Activated T-helper 1 cell treated with anti-CD3 and anti-CD28 coated beads, Interleukin-12 subunit alpha, Interleukin-12 subunit beta, Interleukin-2, Interleukin-4 antibody, amounts not matched to agents 30 ng/mL and 10 ng/mL and 1 ng/mL, durations not matched to agents 14 hours and 24 hours and 36 hours (primary cell): ENCODE measurements at regions of chr14 and their contacts with region 1.

Region 1: GRCh38 chr14:102509744-102510615 is at the start of gene ANKRD9:
- DNase-seq: peak; percentile 89
- H3K4me3 Mint-ChIP-seq: peak within 1 kb of the TSS; percentile 84
- H3K27ac Mint-ChIP-seq: peak within 1 kb of the TSS; percentile 55
- H3K4me1 Mint-ChIP-seq: peaks cover 14% of the 10 kb centered on the region
- H3K27me3 Mint-ChIP-seq: no peaks in the 10 kb centered on the region
- total RNA-seq, gene ANKRD9: 13.4 TPM in 2 replicates

Region 2: DNA sequence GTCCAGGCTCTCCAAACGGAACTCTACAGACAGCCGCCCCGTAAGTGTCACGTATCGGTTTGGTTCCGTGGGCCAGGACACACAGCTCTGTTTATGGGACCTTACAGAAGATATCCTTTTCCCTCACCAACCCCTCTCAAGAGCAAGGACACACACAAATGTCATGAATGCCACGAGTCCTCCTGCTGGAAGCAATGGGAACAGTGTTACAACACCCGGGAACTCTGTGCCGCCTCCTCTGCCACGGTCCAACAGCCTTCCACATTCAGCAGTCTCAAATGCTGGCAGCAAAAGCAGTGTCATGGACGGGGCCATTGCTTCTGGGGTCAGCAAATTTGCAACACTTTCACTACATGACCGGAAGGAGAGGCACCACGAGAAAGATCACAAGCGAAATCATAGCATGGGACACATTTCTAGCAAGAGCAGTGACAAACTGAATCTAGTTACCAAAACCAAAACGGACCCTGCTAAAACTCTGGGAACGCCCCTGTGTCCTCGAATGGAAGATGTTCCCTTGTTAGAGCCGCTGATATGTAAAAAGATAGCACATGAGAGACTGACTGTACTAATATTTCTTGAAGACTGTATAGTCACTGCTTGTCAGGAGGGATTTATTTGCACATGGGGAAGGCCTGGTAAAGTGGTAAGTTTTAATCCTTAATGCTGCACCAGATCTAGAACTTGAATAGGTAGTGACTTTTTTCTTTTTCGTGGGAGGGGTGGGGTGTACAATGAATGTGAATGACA is 300.6 kb before region 1 on chr14:
- intact Hi-C with region 1: no loop called
- DNase-seq: no peak
- H3K4me3 Mint-ChIP-seq: no peak overlapping the region
- H3K27ac Mint-ChIP-seq: no peak overlapping the region
- H3K4me1 Mint-ChIP-seq: no peaks in the 10 kb centered on the region
- H3K27me3 Mint-ChIP-seq: no peaks in the 10 kb centered on the region

Region 3: GRCh38 chr14:102235275-102235897 is 274.6 kb before region 1 on chr14:
- intact Hi-C with region 1: loop called (anchors 1 kb)
- DNase-seq: peak; percentile 68
- H3K4me3 Mint-ChIP-seq: no peak overlapping the region
- H3K27ac Mint-ChIP-seq: no peak overlapping the region
- H3K4me1 Mint-ChIP-seq: no peaks in the 10 kb centered on the region
- H3K27me3 Mint-ChIP-seq: no peaks in the 10 kb centered on the region

Region 4: DNA sequence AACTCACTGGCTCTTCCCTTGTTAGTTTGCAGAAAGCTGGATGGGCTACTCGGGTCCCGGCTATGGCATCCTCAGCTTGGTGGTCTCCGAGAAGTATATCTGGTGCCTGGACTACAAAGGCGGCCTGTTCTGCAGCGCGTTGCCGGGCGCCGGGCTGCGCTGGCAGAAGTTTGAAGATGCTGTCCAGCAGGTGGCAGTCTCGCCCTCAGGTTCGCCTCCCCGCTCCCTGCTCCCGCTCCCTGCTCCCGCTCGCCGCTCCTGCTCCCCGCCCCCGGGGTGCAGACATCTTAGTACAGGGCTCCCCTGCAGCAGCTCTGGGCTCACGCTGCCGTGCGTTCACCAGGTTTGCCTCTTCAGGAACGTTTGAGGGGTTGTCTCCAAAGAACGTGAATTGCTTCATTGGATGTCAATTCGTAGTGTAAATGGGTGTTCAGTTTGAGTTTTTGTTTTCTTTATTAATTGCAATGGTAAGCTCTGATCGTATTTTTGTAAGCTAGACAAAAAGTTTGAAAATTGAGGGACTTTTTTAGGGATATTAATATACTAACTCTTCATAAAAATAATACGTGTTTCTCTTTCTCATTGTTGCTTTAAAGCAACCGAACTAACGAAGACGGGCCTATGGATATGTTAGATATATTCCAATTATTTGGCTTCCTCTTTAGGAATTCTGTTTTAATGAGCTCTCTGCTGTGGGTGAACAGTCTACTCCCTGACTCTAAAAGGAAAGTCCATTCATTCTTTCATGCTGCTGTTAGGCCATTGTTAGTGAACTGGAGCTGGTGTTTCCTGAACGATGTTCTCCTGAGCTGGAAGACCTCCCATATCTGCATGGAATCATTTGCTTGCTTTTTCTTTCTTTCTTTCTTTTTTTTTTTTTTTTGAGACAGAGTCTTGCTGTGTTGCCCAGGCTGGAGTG is 71.7 kb before region 1 on chr14:
- intact Hi-C with region 1: loop called (anchors 2 kb)
- DNase-seq: peak; percentile 64
- H3K4me3 Mint-ChIP-seq: peak overlapping the region; percentile 19
- H3K27ac Mint-ChIP-seq: no peak overlapping the region
- H3K4me1 Mint-ChIP-seq: peaks cover 5% of the 10 kb centered on the region
- H3K27me3 Mint-ChIP-seq: no peaks in the 10 kb centered on the region

Region 5: DNA sequence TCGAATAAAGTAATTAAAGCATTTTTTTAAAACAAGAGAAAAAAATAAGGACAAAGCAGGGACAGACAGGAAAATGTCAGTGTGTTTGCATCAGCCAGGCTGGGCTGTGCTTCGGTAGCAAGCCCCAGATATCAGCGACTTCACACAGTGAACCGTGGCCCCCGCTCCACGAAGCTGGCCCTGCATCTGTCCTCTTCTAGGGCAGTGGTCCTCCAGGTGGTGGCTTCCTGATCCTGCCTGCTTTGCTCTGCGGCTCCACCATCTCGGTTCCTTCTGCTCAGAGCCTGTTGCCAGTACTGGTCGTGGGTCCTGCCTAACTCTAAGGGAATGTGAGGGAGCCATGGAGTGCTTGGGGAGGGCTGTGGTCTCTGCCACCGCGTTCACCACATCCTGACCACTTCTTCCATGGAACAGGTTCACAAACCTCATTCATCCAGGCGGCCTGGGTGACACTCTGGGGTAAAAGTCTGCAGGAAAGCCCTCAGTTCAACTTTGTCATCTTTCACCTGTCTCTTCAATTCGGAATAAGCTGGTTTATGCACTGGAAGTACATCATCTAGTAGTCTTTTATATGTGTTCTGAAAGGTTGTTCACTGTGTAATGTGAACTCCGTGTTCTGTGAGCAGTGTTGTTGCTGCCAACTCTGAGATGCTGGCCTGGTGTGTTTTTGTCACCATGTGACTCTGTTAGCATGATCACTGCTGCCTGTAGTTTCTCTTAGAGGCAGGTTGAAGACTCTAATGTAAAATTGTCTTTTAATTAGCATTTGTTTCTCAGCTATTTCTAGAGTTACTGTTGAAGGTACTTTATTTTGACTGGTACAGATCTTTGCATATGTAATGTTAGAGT is 48.3 kb before region 1 on chr14:
- intact Hi-C with region 1: no loop called
- DNase-seq: no peak
- H3K4me3 Mint-ChIP-seq: no peak overlapping the region
- H3K27ac Mint-ChIP-seq: no peak overlapping the region
- H3K4me1 Mint-ChIP-seq: peaks cover 12% of the 10 kb centered on the region
- H3K27me3 Mint-ChIP-seq: no peaks in the 10 kb centered on the region

Region 6: DNA sequence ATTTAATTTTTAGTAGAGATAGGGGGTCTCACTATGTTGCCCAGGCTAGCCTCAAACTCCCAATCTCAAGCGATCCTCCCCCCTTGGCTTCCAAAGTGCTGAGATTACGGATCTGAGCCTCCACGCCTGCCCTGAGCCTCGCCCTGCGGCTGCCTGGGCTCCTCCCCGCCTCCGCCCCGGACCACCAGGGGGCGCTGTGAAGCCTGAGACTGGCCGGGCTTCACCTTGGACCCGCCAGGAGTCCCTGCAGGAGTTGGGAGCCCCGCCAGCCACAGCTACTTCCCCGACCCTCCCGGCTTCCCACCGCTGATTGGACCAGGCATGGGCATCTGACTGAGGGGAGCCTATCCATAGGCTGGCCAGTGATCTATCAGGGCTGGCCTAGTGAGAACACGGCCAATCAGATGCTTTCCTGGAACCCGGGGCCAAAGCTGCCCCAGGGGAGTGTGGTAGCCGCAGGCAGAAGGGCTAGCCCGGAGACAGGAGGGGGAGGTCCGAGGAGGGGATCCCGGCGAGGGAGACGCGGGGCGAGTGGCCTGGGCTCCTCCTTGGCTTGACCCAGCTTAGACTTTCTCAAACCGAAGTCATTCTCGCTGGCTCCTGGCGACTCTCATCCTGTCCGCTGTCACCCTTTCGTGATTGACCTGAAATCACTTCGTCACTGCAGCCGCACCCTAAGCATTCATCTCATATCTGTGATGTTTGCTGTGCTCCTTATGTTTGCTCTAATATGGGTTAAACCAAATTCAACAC is 14.7 kb after region 1 on chr14:
- intact Hi-C with region 1: loop called (anchors 1 kb)
- DNase-seq: peak; percentile 94
- H3K4me3 Mint-ChIP-seq: peak overlapping the region; percentile 92
- H3K27ac Mint-ChIP-seq: peak overlapping the region; percentile 88
- H3K4me1 Mint-ChIP-seq: peaks cover 27% of the 10 kb centered on the region
- H3K27me3 Mint-ChIP-seq: peaks cover 7% of the 10 kb centered on the region

Region 7: GRCh38 chr14:102545461-102546265 is 35.7 kb after region 1 on chr14:
- intact Hi-C with region 1: no loop called
- DNase-seq: no peak
- H3K4me3 Mint-ChIP-seq: peak overlapping the region; percentile 65
- H3K27ac Mint-ChIP-seq: no peak overlapping the region
- H3K4me1 Mint-ChIP-seq: no peaks in the 10 kb centered on the region
- H3K27me3 Mint-ChIP-seq: peaks cover 38% of the 10 kb centered on the region